ENCODE measurements at regions of chr19 and their contacts with region 1.

Region 1: DNA sequence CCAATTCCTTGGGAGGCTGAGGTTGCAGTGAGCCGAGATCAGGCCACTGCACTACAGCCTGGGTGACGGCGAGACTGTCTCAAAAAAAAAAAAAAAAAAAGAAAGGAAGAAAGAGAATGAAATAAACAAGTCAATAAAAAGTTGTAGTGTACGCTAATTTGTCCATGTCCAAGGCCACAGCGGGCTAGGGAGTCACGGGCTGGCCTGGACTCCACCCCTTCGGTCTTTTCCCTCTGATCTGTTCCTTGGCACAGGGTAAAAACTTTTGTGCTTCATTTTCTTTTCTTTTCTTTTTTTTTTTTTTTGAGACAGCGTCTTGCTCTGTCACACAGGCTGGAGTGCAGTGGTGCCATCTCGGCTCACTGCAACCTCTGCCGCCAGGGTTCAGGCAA is 19.4 kb upstream of the MKNK2 start:
- DNase-seq: no peak
- ATAC-seq: no peak
- H3K4me3 ChIP-seq: no peak overlapping the region
- H3K27ac ChIP-seq: peak overlapping the region in 1 of 4 donors; percentile 48
- H3K4me1 ChIP-seq: peaks cover 0 to 2% of the 10 kb centered on the region in 2 donors
- H3K27me3 ChIP-seq: no peaks in the 10 kb centered on the region
- CTCF ChIP-seq: no peak
- POLR2A ChIP-seq: no peak

Region 2: GRCh38 chr19:488505-489417 is 1581.7 kb before region 1 on chr19:
- in situ Hi-C with region 1: no loop called
- intact Hi-C with region 1: no loop called
- DNase-seq: peak; percentile 87 to 95
- ATAC-seq: peak; percentile 92
- H3K4me3 ChIP-seq: peak overlapping the region; percentile 76 to 93 (median 84)
- H3K27ac ChIP-seq: peak overlapping the region; percentile 79 to 94 (median 92)
- H3K4me1 ChIP-seq: peaks cover 6 to 7% of the 10 kb centered on the region in 2 donors
- H3K27me3 ChIP-seq: peaks cover 10 to 21% (median 14%) of the 10 kb centered on the region in 3 donors
- CTCF ChIP-seq: peak in 1 of 5 experiments; percentile 31
- POLR2A ChIP-seq: peak; percentile 69 to 83

Region 3: GRCh38 chr19:1935484-1936208 is 134.8 kb before region 1 on chr19:
- in situ Hi-C with region 1: loop called in 2 of 4 experiments (anchors 10 kb)
- intact Hi-C with region 1: no loop called
- DNase-seq: peak; percentile 31 to 80
- ATAC-seq: peak; percentile 38 to 47
- H3K4me3 ChIP-seq: no peak overlapping the region
- H3K27ac ChIP-seq: peak overlapping the region; percentile 49 to 79 (median 74)
- H3K4me1 ChIP-seq: peaks cover 14 to 15% of the 10 kb centered on the region in 2 donors
- H3K27me3 ChIP-seq: no peaks in the 10 kb centered on the region
- CTCF ChIP-seq: no peak
- POLR2A ChIP-seq: peak in 1 of 2 donors; percentile 8

Region 4: GRCh38 chr19:2151339-2152229 is 81.2 kb after region 1 on chr19 and contains the start of gene AP3D1:
- in situ Hi-C with region 1: no loop called
- intact Hi-C with region 1: no loop called
- DNase-seq: peak; percentile 100
- ATAC-seq: peak; percentile 92 to 94
- H3K4me3 ChIP-seq: peak within 1 kb of the TSS; percentile 83 to 100 (median 92)
- H3K27ac ChIP-seq: peak within 1 kb of the TSS; percentile 92 to 97 (median 96)
- H3K4me1 ChIP-seq: peaks cover 26 to 34% of the 10 kb centered on the region in 2 donors
- H3K27me3 ChIP-seq: no peaks in the 10 kb centered on the region
- CTCF ChIP-seq: no peak
- POLR2A ChIP-seq: peak; percentile 62 to 86
- total RNA-seq, gene AP3D1: 71.0 to 139 (median 99.0) TPM

Region 5: DNA sequence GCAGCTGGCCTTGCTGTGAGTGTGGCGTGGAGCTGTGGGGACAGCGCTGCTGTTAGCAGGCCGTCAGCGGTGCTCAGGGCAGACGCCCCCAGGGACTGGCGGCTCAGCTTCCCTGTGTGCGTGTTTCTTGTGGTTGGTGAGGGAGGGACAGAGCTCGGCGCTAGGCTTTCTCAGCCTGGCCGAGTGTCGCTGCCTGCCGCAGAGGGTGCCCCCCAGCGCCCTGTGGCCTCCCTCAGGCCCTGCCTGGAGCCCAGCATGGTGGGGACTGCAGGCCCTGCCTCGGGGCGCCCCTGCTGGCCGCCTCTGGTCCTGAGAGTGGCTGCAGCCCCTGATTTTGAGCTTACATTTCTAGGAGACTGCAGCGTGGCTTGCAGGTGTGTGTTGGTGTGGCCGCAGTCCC is 128.8 kb after region 1 on chr19:
- in situ Hi-C with region 1: no loop called
- intact Hi-C with region 1: no loop called
- DNase-seq: no peak
- ATAC-seq: no peak
- H3K4me3 ChIP-seq: no peak overlapping the region
- H3K27ac ChIP-seq: no peak overlapping the region
- H3K4me1 ChIP-seq: no peaks in the 10 kb centered on the region
- H3K27me3 ChIP-seq: no peaks in the 10 kb centered on the region
- CTCF ChIP-seq: no peak
- POLR2A ChIP-seq: no peak